SK-N-SH (cell line): ENCODE measurements at regions of chr15 and their contacts with region 1.

Region 1: GRCh38 chr15:85871545-85871944 is 76.8 kb upstream of the KLHL25 start:
- DNase-seq: no peak
- H3K4me3 ChIP-seq: no peak overlapping the region
- H3K27ac ChIP-seq: no peak overlapping the region
- H3K4me1 ChIP-seq: no peaks in the 10 kb centered on the region
- H3K27me3 ChIP-seq: no peaks in the 10 kb centered on the region
- CTCF ChIP-seq: no peak
- EP300 ChIP-seq: no peak
- RAD21 ChIP-seq: no peak

Region 2: GRCh38 chr15:85858586-85859375 is 12.8 kb before region 1 on chr15:
- CTCF ChIA-PET with region 1: interaction called, 12 read pairs
- POLR2A ChIA-PET with region 1: no interaction called
- DNase-seq: peak; percentile 83
- H3K4me3 ChIP-seq: peak overlapping the region in 1 of 2 experiments; percentile 48; a peak in 2 of 4 replicates
- H3K27ac ChIP-seq: no peak overlapping the region
- H3K4me1 ChIP-seq: peaks cover 0 to 2% of the 10 kb centered on the region in 2 experiments; a peak in 1 of 4 replicates
- H3K27me3 ChIP-seq: no peaks in the 10 kb centered on the region; the same call in 1 of the 2 replicates
- CTCF ChIP-seq: peak; percentile 86
- EP300 ChIP-seq: no peak
- RAD21 ChIP-seq: peak; percentile 76

Region 3: DNA sequence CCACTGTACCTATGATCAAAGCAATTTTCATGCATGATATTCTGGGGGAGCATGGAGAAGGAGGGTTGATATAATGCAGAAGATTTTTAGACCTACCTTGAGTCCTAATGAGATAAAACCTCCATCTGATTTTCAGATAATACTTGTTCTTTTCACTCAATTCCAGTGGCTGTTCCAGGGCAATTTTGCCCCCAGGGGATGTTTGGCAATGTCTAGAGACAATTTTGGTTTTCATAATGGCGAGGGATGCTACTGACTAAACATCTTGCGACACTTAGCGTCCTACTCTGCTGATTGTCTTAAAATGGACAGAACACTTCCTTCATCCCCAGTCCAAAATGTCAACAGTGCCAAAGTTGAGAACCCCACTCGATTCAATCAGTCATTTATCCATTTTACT is 234.8 kb after region 1 on chr15:
- CTCF ChIA-PET with region 1: no interaction called
- POLR2A ChIA-PET with region 1: no interaction called
- DNase-seq: no peak
- H3K4me3 ChIP-seq: no peak overlapping the region
- H3K27ac ChIP-seq: no peak overlapping the region
- H3K4me1 ChIP-seq: no peaks in the 10 kb centered on the region
- H3K27me3 ChIP-seq: no peaks in the 10 kb centered on the region
- CTCF ChIP-seq: no peak
- EP300 ChIP-seq: no peak
- RAD21 ChIP-seq: no peak